Kidney (tissue), 22 donors: ENCODE measurements at regions of chr13 and their contacts with region 1.

Region 1: GRCh38 chr13:98397221-98397620 is 179.7 kb downstream of the STK24 start:
- DNase-seq: peak in 1 of 5 donors; percentile 51
- H3K4me3 ChIP-seq: no peak overlapping the region
- H3K27ac ChIP-seq: no peak overlapping the region
- H3K4me1 ChIP-seq: no peaks in the 10 kb centered on the region
- H3K27me3 ChIP-seq: no peaks in the 10 kb centered on the region
- CTCF ChIP-seq: peak; percentile 31

Region 2: DNA sequence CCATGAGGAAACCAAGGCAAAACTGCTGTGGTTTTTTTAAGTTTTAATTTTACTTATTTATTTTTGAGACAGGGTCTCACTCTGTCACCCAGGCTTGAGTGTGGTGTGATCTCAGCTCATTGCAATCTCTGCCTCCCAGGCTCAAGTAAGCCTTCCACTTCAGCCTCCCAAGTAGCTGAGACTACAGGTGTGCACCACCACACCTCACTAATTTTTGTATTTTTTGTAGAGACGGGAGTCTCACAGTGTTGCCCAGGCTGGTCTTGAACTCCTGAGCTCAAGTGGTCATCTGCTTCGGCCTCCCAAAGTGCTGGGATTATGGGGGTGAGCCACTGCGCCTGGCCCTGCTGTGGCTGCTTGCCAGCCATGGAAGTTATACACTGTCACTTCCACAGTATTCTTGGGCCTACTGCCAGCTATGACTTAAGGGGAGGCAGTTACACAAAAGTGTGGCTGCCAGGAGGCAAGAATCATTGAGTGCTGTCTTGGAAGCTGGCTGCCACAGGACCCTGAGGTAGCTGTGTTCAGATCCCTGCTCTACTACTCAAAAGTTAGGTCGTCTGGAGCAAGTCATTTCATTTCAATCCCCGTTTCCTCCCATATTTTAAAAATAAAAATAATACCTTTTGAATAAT is 241.6 kb before region 1 on chr13:
- intact Hi-C with region 1: loop called (anchors 10 kb)
- DNase-seq: peak in 1 of 5 donors; percentile 62
- H3K4me3 ChIP-seq: no peak overlapping the region
- H3K27ac ChIP-seq: no peak overlapping the region
- H3K4me1 ChIP-seq: peaks cover 0 to 18% (median 8%) of the 10 kb centered on the region in 3 donors
- H3K27me3 ChIP-seq: no peaks in the 10 kb centered on the region
- CTCF ChIP-seq: no peak